ENCODE measurements at regions of chr22 and their contacts with region 1.

Region 1: GRCh38 chr22:20957316-20958101 is 9.5 kb upstream of the AIFM3 start:
- DNase-seq: peak; percentile 61 to 80
- ATAC-seq: peak; percentile 87 to 89
- H3K4me3 ChIP-seq: peak overlapping the region; percentile 84
- H3K27ac ChIP-seq: peak overlapping the region; percentile 98
- H3K4me1 ChIP-seq: peaks cover 23% of the 10 kb centered on the region
- CTCF ChIP-seq: no peak
- EP300 ChIP-seq: no peak
- POLR2A ChIP-seq: peak; percentile 66
- RAD21 ChIP-seq: no peak

Region 2: GRCh38 chr22:20490183-20490940 is 467.1 kb before region 1 on chr22:
- CTCF ChIA-PET with region 1: no interaction called
- POLR2A ChIA-PET with region 1: no interaction called
- DNase-seq: no peak
- ATAC-seq: no peak
- H3K4me3 ChIP-seq: no peak overlapping the region
- H3K27ac ChIP-seq: no peak overlapping the region
- H3K4me1 ChIP-seq: peaks cover 6% of the 10 kb centered on the region; the same call in 2 of the 3 replicates
- CTCF ChIP-seq: no peak
- EP300 ChIP-seq: no peak
- POLR2A ChIP-seq: no peak
- RAD21 ChIP-seq: no peak

Region 3: DNA sequence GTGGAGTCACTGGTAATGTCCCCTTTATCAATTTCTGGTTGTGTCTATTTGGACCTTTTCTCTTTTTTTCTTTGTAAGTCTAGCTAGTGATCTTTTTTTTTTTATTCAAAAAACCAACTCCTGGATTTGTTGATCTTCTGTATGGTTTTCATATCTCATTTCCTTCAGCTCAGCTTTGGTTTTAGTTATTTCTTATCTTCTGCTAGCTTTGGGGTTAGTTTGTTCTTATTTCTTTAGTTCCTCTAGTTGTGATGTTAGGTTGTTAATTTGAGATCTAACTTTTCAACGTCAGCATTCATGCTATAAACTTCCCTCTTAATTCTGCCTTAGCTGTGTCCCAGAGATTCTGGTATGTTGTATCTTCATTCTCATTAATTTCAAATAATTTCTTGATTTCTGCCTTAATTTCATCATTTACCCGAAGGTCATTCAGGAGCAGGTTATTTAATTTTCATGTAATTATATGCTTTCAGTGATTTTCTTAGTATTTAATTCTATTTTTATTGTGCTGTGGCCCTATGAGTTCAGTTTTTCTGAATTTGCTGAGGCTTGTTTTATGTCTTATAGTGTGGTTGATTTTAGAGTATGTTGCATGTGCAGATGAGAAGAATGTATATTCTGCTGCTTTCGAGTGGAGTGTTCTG is 127.9 kb before region 1 on chr22:
- CTCF ChIA-PET with region 1: no interaction called
- POLR2A ChIA-PET with region 1: no interaction called
- DNase-seq: no peak
- ATAC-seq: no peak
- H3K4me3 ChIP-seq: no peak overlapping the region
- H3K27ac ChIP-seq: no peak overlapping the region
- H3K4me1 ChIP-seq: no peaks in the 10 kb centered on the region
- CTCF ChIP-seq: no peak
- EP300 ChIP-seq: no peak
- POLR2A ChIP-seq: no peak
- RAD21 ChIP-seq: no peak

Region 4: DNA sequence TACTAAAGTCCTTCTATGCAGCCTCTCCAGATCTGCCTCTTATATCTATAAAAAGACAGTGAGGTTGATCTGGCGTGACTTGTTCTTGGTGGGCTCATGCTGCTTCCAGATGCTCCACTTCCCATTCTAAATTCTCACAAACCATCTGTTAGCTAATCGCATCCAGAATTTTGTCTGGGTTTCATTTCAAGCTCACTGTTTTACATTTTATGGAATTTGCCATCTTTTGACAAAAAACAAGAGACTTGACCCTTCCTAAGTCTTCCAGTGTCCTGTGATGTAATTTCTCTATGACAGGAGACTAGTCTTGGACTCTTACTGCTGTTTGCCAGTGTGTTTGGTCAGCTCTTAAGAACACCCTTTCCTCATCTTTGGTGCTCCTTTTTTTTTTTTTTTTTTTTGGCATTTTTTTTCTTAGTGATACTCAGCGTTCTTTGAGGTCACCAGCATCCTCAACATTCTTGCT is 17.3 kb before region 1 on chr22:
- CTCF ChIA-PET with region 1: interaction called, 11 read pairs
- POLR2A ChIA-PET with region 1: no interaction called
- DNase-seq: no peak
- ATAC-seq: no peak
- H3K4me3 ChIP-seq: no peak overlapping the region
- H3K27ac ChIP-seq: no peak overlapping the region
- H3K4me1 ChIP-seq: peaks cover 21% of the 10 kb centered on the region
- CTCF ChIP-seq: no peak
- EP300 ChIP-seq: no peak
- POLR2A ChIP-seq: no peak
- RAD21 ChIP-seq: no peak

Region 5: GRCh38 chr22:20946080-20946986 is 11.2 kb before region 1 on chr22:
- CTCF ChIA-PET with region 1: interaction called, 10 read pairs
- POLR2A ChIA-PET with region 1: no interaction called
- DNase-seq: no peak
- ATAC-seq: no peak; a peak in 1 of 6 replicates
- H3K4me3 ChIP-seq: no peak overlapping the region
- H3K27ac ChIP-seq: no peak overlapping the region
- H3K4me1 ChIP-seq: peaks cover 32% of the 10 kb centered on the region
- CTCF ChIP-seq: no peak
- EP300 ChIP-seq: no peak
- POLR2A ChIP-seq: no peak
- RAD21 ChIP-seq: no peak

Region 6: GRCh38 chr22:20981787-20982562 is 24.5 kb after region 1 on chr22 and contains the start of gene LZTR1:
- CTCF ChIA-PET with region 1: interaction called, 10 read pairs
- POLR2A ChIA-PET with region 1: interaction called, 19 read pairs
- DNase-seq: peak; percentile 55 to 75
- ATAC-seq: peak; percentile 91 to 96
- H3K4me3 ChIP-seq: peak within 1 kb of the TSS; percentile 73
- H3K27ac ChIP-seq: peak within 1 kb of the TSS; percentile 92 to 97
- H3K4me1 ChIP-seq: peaks cover 11% of the 10 kb centered on the region; the same call in 2 of the 3 replicates
- CTCF ChIP-seq: peak; percentile 32; the same call in 1 of the 3 replicates
- EP300 ChIP-seq: no peak
- POLR2A ChIP-seq: peak; percentile 92
- RAD21 ChIP-seq: peak; percentile 8 to 23; a peak in 3 of 5 replicates
- polyA plus RNA-seq, gene LZTR1: 14.1 and 14.4 TPM in 2 replicates

Region 7: GRCh38 chr22:21045585-21046294 is 88.2 kb after region 1 on chr22 and contains the start of gene LRRC74B:
- CTCF ChIA-PET with region 1: no interaction called
- POLR2A ChIA-PET with region 1: no interaction called
- DNase-seq: peak; percentile 78 to 89
- ATAC-seq: peak; percentile 92 to 98
- H3K4me3 ChIP-seq: peak within 1 kb of the TSS; percentile 49
- H3K27ac ChIP-seq: peak within 1 kb of the TSS; percentile 35 to 80; a peak in 4 of 6 replicates
- H3K4me1 ChIP-seq: peaks cover 12% of the 10 kb centered on the region
- CTCF ChIP-seq: no peak
- EP300 ChIP-seq: no peak
- POLR2A ChIP-seq: no peak
- RAD21 ChIP-seq: no peak
- polyA plus RNA-seq, gene LRRC74B: 0.05 and 0.08 TPM in 2 replicates

Region 8: DNA sequence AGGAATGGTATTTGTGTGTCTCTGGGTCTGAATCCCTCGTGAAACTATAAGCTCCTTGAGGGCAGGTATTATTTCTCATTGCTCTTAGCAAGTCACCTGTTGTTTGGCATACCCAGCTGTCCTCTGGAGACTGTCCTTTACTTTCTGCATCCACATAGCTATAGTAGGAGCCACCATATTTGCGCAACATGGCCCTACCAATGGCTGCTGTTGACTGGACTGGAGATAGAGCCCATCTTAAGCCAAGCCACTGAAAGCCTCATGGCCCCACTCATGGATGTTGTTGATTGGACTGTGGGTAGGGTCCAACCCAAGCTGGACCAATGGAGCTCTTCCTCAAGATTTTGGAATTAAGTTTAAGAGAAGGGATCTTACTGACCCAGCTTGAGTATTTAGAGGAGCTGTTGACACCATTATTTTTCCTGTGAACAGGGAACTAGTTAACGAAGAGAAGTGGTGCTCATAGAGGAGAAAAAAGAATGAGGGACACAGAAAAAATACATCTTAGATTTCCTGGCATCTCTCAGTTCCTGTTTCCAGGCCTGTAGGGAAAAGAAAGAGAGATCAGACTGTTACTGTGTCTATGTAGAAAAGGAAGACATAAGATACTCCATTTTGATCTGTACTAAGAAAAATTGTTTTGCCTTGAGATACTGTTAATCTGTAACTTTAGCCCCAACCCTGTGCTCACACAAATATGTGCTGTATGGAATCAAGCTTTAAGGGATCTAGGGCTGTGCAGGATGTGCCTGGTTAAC is 135.5 kb after region 1 on chr22:
- CTCF ChIA-PET with region 1: no interaction called
- POLR2A ChIA-PET with region 1: no interaction called
- DNase-seq: no peak
- ATAC-seq: no peak
- H3K4me3 ChIP-seq: no peak overlapping the region
- H3K27ac ChIP-seq: no peak overlapping the region
- H3K4me1 ChIP-seq: no peaks in the 10 kb centered on the region
- CTCF ChIP-seq: no peak
- EP300 ChIP-seq: no peak
- POLR2A ChIP-seq: no peak
- RAD21 ChIP-seq: no peak

Measured in A549 (cell line).